KBM-7 (cell line): ENCODE measurements at regions of chr9 and their contacts with region 1.

Region 1: GRCh38 chr9:36903541-36904435 is 130.3 kb downstream of the PAX5 start:
- DNase-seq: peak; percentile 44

Region 2: DNA sequence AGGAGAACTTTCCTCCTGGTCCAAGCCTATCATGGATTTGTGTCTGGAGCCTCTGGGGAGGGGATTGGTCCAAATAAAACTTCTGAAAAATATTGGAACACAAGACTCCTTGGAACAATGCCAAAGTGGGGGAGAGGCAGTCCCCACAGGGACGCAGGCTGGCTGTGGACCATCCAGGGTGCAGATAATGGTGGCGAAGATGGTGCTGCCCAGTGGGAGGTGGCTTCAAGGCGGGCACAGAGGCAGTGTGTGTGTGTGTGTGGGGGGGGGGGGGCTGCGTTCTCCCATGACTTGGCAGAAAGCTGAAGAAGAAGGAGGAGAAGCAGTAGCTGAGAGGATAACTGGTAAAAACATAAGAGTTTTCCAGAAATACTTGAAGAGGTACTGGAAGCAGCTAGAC is 144.6 kb before region 1 on chr9:
- in situ Hi-C with region 1: no loop called
- DNase-seq: no peak

Region 3: DNA sequence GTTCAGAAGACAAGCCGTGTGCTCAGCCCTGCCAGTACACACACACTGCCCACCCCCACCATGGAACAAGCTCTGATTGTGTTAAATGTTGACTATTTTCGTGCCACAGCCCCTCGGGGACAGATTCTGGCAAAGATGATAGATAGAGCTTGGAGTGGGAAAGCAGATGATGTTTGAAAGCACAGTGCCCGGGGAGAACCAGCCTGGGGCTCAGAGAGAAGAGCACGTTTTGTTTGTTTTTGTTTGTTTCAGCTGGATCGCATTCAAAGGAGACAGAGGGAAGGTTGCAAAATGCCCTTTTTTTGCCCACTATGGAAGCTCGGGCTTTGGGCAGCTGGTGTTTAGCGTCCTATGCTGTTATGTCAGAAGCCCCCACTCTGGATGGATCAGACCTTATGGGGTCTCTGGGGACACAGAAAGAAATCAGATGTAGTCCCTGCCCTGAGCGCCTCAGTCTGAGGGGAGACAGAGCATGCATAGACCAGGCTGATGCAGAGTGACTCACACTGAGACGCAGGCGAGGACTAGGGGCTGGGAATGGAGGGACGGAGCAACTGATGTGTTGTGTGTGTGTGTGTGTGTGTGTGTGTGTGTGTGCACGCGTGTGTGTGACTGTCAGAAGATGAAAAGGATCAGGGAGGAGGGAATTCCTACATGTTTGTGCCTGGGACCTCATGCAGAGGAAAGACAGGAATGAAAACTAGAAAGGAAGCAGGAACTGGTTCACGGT is 101.4 kb before region 1 on chr9:
- in situ Hi-C with region 1: loop called (anchors 25 kb)
- DNase-seq: no peak